Heart left ventricle (tissue), 16 donors: ENCODE measurements at regions of chr20 and their contacts with region 1.

Region 1: GRCh38 chr20:44576297-44576696 is 6.1 kb upstream of the PKIG start:
- DNase-seq: peak in 1 of 5 donors; percentile 50
- ATAC-seq: peak in 2 of 4 donors; percentile 16 to 27
- H3K4me3 ChIP-seq: no peak overlapping the region
- H3K27ac ChIP-seq: peak overlapping the region; percentile 6 to 85 (median 62)
- H3K4me1 ChIP-seq: peaks cover 3 to 84% (median 62%) of the 10 kb centered on the region in 12 donors
- H3K27me3 ChIP-seq: no peaks in the 10 kb centered on the region
- CTCF ChIP-seq: peak in 11 of 12 donors; percentile 27 to 68 (median 50)
- POLR2A ChIP-seq: no peak

Region 2: DNA sequence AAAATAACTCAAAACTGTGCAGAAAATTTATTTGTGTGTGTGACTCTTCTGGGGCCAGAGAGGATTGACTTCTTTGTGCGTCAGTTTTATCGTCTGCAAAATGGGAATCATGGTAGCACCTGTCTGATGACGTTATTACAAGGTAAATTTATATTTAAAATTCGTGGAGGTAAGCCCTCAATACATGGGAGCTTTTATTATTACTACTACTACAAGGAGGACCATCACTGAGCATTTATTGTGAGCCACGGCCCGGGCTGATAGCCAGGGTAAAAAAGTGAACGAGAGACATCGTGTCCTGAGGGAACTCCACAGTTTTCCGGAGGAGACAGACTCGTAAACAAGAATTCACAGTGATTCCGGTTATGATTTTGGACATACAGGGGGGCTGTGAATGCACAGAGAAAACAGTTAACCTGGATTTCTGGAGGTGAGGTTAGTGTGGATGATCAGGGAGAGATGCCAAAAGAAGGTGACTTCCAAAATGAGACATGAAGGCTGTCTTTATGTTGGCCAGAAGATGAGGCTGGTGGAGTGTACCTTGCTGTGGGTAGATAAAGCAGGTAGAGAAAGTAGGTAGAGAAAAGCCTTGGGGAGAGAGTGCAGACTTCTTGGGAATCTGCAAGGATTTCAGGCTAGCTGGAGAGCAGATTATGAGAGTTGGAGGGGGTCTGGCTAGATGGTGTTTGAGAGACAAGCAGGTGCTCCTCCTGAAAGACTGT is 43.9 kb before region 1 on chr20:
- intact Hi-C with region 1: loop called in 2 of 10 experiments (anchors 5 kb)
- DNase-seq: no peak
- ATAC-seq: peak in 2 of 4 donors; percentile 8 to 37
- H3K4me3 ChIP-seq: peak overlapping the region; percentile 45 to 99 (median 86)
- H3K27ac ChIP-seq: peak overlapping the region in 11 of 12 donors; percentile 17 to 87 (median 76)
- H3K4me1 ChIP-seq: peaks cover 0 to 32% (median 10%) of the 10 kb centered on the region in 12 donors
- H3K27me3 ChIP-seq: peaks cover 0 to 10% (median 0%) of the 10 kb centered on the region in 9 donors
- CTCF ChIP-seq: no peak
- POLR2A ChIP-seq: no peak

Region 3: GRCh38 chr20:45011108-45011526 is 434.8 kb after region 1 on chr20:
- intact Hi-C with region 1: no loop called
- DNase-seq: peak in 3 of 5 donors; percentile 33 to 50 (median 35)
- ATAC-seq: peak in 3 of 4 donors; percentile 71 to 83 (median 75)
- H3K4me3 ChIP-seq: no peak overlapping the region
- H3K27ac ChIP-seq: no peak overlapping the region
- H3K4me1 ChIP-seq: peaks cover 0 to 37% (median 14%) of the 10 kb centered on the region in 12 donors
- H3K27me3 ChIP-seq: no peaks in the 10 kb centered on the region
- CTCF ChIP-seq: peak; percentile 52 to 85 (median 70)
- POLR2A ChIP-seq: no peak